ENCODE measurements at regions of chr2 and their contacts with region 1.

Region 1: DNA sequence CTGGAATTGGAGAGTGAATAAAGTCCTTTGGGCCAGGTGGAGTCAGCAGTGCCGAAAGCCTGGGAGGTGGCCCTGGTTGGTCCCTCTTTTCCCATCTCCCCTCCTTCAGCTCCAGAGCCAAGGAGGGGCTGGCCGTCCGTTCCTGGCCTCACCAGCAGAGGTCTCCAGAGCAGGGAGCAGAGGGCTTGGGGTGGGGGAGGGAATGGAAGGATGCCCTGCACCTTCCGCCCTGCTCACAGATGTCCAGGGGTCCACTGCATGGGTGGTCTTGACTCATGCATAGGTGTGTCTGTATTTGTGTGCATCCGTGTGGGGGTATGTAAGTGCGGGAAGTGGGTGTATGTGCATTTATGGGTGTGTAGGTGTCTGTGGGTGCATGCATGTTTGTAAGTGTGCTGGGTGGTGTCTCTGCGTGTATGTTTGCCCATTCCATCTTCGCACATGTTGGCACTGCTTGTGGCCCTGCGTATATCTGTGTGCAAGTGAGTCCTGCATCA is 201.8 kb downstream of the ZFP36L2 start:
- H3K4me3 ChIP-seq: no peak overlapping the region
- H3K27ac ChIP-seq: no peak overlapping the region
- H3K4me1 ChIP-seq: no peaks in the 10 kb centered on the region
- CTCF ChIP-seq: peak; percentile 51; the same call in 1 of the 2 replicates

Region 2: DNA sequence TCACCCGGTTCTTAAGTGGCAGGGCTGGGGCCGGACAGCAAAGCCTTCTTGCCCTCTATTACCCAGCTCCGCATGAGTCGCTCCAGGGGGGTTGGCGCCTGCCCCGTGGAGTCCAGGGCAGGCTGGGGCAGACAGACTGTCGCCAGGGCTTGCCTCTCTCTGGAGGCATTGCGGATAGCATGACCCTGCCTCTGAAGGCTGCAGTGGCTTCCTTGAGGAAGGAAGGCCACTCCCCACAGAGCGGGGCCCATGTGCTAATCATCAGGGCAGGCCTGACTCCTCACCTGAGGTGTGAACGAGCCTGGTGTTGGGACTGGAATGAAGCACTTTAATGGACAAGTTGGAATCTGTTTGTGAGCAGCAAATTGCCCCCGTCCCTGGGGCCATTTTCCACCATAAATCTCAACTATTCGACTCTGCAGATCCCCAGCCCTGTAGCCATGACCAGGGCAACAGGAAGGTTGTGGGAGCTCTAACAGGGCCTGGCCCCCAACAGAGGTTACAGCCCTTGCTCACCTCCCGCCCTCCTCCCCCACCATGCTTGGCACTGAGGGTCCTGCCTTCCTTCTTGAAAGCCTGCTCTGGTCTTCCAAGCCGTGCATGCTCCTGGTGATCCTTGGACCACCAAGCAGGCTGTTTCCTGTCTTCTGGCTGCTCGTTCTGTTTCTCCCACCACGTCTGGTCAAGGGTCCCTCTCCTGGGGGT is 87.2 kb before region 1 on chr2:
- CTCF ChIA-PET with region 1: no interaction called
- POLR2A ChIA-PET with region 1: no interaction called
- H3K4me3 ChIP-seq: no peak overlapping the region
- H3K27ac ChIP-seq: no peak overlapping the region
- H3K4me1 ChIP-seq: no peaks in the 10 kb centered on the region
- CTCF ChIP-seq: no peak

Region 3: DNA sequence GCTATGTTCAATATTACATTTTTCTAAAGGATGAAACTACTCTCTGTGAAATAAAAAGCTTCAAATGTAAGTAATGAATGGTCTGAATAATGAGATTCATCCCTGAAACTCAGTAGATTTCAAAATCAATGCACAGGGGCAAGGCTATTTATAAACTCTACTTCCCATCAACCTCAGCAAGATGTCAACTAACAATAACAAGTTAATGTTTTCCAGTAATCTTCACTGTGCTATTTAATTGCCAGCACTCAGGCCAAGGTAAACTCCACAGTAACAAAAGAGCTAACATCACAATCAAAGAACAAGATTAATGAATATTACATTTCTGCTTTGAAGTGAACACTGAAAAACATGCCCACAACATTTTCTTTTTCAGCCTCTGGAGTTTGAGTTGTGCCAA is 346.1 kb after region 1 on chr2:
- CTCF ChIA-PET with region 1: no interaction called
- POLR2A ChIA-PET with region 1: interaction called, 10 read pairs
- H3K4me3 ChIP-seq: no peak overlapping the region
- H3K27ac ChIP-seq: no peak overlapping the region
- H3K4me1 ChIP-seq: peaks cover 25% of the 10 kb centered on the region
- CTCF ChIP-seq: no peak

Region 4: DNA sequence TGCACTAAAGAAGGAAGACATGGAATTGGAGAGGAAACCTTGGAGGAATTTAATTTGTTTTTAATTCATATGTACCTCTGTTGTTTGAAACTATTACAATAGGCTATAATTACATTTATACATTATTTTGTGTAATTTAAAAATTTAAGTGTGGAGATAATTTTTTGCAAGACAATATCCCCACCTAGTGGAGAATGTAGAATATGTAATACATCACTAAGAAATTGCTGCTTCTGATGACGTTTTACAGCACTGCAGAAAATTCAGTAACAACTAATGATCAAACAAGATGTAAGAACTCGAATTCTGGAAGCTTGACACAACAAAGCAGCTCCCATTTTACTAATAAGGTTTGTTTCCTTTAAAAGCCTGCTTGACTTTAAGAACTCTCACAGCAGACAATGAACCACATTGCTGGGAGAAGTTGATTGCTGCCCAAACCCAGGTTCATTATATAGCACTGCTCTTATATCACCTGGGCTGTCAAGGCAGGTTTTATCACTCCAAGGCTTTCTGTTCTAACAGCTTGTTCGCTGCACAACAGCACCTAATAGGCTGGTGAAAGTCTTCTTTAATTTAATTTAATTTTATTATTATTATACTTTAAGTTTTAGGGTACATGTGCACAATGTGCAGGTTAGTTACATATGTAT is 517.8 kb after region 1 on chr2:
- CTCF ChIA-PET with region 1: interaction called, 11 read pairs
- POLR2A ChIA-PET with region 1: no interaction called
- H3K4me3 ChIP-seq: no peak overlapping the region
- H3K27ac ChIP-seq: no peak overlapping the region
- H3K4me1 ChIP-seq: no peaks in the 10 kb centered on the region
- CTCF ChIP-seq: no peak

Measured in HEK293 (cell line).